PC-9 (cell line): ENCODE measurements at regions of chr1 and their contacts with region 1.

Region 1: DNA sequence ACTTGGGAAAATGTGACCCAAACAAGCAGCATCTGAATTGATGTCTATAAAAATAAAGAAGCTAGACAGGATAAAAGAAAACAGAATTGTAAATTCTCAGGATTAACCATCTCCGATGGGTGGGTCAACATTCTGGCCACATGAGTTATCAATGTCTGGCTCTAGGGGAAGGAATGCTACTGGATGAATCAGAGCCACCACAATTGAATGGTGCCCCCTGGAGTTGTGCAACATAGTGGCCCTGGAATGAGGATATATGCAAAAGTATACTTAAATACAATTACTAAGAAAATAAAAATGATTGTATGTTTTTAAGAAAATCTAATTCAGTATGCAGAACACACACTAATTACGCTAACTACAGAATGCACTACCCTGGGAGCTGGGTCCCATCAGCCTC is 185.6 kb downstream of the TGFBR3 start:
- DNase-seq: peak; percentile 5 to 56
- H3K4me3 ChIP-seq: no peak overlapping the region
- H3K27ac ChIP-seq: no peak overlapping the region
- H3K4me1 ChIP-seq: peaks cover 22% of the 10 kb centered on the region
- H3K27me3 ChIP-seq: no peaks in the 10 kb centered on the region
- CTCF ChIP-seq: no peak; the same call in 1 of the 2 replicates

Region 2: DNA sequence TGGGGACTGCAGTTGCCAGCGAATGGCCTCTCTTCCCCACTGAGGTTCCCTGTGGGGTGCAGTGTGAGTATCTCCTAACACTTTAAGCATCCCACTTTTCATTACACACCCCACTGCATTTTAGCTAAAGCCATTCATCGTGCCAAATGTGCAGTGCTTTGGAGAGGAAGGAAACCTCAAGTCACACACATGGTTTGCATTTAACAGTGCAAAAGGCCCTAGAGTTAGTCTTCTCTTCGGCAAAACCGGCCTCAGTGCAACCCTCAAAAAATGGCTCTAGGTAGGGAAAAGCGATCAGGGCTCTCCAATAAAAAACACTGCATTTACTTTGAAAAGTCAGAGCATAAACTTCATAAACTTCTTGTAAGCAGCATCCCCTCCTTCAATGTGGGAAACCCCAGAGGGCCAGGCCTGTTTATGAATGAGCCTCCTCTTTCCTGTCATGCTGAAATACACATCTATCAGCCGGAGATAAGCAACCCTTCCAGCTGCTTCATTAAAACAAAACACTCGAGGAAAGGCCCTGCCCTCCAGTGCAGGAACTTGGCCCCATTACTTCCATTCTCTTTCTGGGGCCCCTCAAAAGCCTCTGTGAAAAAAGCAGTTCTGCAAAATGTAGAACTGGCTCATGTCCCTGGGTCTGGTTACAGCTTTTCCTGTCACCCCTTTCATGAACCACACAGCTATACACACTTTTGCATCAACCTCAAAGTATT is 15.7 kb before region 1 on chr1:
- CTCF ChIA-PET with region 1: no interaction called
- POLR2A ChIA-PET with region 1: no interaction called
- intact Hi-C with region 1: no loop called
- DNase-seq: no peak
- H3K4me3 ChIP-seq: no peak overlapping the region
- H3K27ac ChIP-seq: no peak overlapping the region
- H3K4me1 ChIP-seq: peaks cover 13% of the 10 kb centered on the region
- H3K27me3 ChIP-seq: no peaks in the 10 kb centered on the region
- CTCF ChIP-seq: no peak

Region 3: GRCh38 chr1:92754000-92754718 is 1053.8 kb after region 1 on chr1:
- CTCF ChIA-PET with region 1: no interaction called
- POLR2A ChIA-PET with region 1: interaction called, 35 read pairs
- intact Hi-C with region 1: no loop called
- DNase-seq: peak in 1 of 2 experiments; percentile 38
- H3K4me3 ChIP-seq: no peak overlapping the region
- H3K27ac ChIP-seq: no peak overlapping the region; the same call in 1 of the 2 replicates
- H3K4me1 ChIP-seq: peaks cover 13% of the 10 kb centered on the region
- H3K27me3 ChIP-seq: no peaks in the 10 kb centered on the region
- CTCF ChIP-seq: no peak